Activated CD4-positive, alpha-beta T cell treated with anti-CD3 and anti-CD28 coated beads, Interleukin-2, amount 10 ng/mL, durations not matched to agents 24 days and 14 days (primary cell): ENCODE measurements at regions of chr1 and their contacts with region 1.

Region 1: DNA sequence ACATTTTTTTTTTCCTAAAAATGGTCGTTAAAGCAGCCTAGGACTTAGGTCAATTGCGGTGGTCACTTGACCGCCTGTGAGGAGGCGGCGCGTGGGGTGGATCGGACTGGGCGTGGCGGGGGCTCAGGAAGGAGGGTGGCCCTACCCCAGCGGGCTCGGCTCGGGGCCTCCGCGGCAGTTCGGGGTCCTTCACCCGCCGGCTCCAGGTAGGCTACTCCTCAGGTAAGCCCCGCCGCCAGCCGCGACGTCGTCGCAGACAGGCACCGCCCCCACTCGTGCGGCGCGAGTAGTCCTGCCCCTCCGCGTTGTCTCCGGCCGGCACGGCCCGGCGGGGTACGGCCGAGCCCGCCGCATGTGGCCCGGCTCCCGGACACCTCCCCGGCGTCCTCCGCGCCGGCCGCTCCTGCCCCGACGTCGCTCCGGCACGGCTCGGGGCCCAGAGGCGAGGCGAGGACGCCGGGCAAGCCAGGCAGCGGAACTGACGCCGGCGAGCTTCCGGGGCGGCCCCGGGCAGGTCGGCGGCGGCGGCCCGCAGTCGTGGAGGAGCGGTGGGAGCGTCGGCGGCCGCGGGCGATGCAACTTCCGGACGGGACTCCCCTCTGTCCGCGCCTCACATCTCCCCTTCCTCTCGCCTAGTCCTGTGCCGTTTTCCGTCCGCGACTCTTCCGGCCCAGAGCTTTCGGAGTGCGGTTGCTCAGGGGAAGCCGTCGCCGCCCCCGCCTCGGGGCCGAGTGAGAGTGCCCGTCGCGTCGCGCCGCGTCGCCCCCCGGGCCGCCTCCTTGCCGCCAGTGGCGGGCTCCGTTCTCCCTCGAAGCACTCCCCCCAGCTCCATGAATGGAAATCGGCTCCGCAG is at the start of gene AGO3:
- DNase-seq: peak; percentile 96
- H3K4me3 Mint-ChIP-seq: peak within 1 kb of the TSS; percentile 94
- H3K27ac Mint-ChIP-seq: peak within 1 kb of the TSS; percentile 95
- H3K4me1 Mint-ChIP-seq: peaks cover 22% of the 10 kb centered on the region
- H3K27me3 Mint-ChIP-seq: no peaks in the 10 kb centered on the region
- total RNA-seq, gene AGO3: 25.9 and 32.1 TPM in 2 replicates

Region 2: GRCh38 chr1:35835398-35835797 is 95.4 kb before region 1 on chr1:
- intact Hi-C with region 1: no loop called
- DNase-seq: no peak
- H3K4me3 Mint-ChIP-seq: no peak overlapping the region
- H3K27ac Mint-ChIP-seq: no peak overlapping the region
- H3K4me1 Mint-ChIP-seq: no peaks in the 10 kb centered on the region
- H3K27me3 Mint-ChIP-seq: no peaks in the 10 kb centered on the region

Region 3: DNA sequence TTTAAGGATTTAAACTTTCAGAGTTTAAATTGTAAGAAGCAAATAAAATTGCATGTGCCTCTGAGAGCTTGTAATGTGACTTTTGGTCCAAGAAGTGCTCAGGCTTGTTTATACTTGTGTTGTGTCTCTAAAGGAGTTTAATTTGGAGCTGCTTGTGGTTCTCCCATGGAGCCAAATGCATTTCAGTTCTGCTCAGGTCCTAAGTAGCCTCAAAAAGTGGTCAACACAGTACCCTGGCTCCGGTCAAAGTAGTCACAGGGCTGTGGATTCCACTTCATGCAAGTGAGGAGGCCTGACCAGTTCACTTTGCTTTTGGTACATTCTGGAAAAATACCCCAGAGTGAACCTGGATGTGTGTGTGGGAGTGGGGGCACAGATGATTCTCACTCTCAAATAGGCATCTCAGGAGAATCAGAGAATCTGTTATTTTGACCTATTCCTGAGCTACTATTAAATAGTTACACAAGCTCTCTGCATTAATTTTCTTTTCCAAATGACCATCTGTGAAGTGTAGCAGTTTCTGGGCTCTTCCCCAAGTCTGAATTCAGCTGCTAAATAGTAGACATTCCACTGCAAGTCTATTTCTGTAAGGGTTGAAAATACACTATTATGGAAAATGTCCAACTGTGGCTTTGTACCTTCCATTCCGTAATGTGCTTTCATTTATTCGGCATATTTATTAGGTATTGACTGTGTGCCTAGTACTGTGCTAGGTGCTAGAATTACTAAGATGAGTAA is 79.5 kb before region 1 on chr1:
- intact Hi-C with region 1: no loop called
- DNase-seq: no peak
- H3K4me3 Mint-ChIP-seq: no peak overlapping the region
- H3K27ac Mint-ChIP-seq: no peak overlapping the region
- H3K4me1 Mint-ChIP-seq: no peaks in the 10 kb centered on the region
- H3K27me3 Mint-ChIP-seq: no peaks in the 10 kb centered on the region

Region 4: GRCh38 chr1:35882945-35883634 is 47.7 kb before region 1 on chr1 and contains the start of gene AGO1:
- intact Hi-C with region 1: loop called (anchors 2 kb)
- DNase-seq: peak; percentile 100
- H3K4me3 Mint-ChIP-seq: peak within 1 kb of the TSS; percentile 95
- H3K27ac Mint-ChIP-seq: peak within 1 kb of the TSS; percentile 82
- H3K4me1 Mint-ChIP-seq: peaks cover 41% of the 10 kb centered on the region
- H3K27me3 Mint-ChIP-seq: peaks cover 5% of the 10 kb centered on the region
- total RNA-seq, gene AGO1: 38.6 and 39.1 TPM in 2 replicates

Region 5: DNA sequence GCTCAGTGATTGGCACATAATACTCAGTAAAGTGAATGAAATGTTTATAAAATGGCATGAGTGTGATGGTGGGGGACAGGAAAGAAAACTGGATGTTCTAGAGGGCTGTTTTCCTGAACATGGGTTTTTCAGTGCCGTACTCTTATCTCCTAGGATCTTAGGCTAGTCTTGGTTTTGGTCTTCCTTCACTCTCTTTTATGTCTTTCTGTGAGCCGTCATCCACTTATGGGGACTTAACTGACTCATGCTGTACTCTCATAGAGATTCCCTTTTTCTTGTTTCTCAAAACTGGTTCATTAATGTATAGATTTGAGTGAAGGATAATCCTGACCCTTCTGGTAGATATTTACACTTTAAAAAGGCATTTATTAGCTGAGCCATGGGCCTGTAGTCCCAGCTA is 16.7 kb after region 1 on chr1:
- intact Hi-C with region 1: loop called (anchors 1 kb)
- DNase-seq: no peak
- H3K4me3 Mint-ChIP-seq: no peak overlapping the region
- H3K27ac Mint-ChIP-seq: peak overlapping the region; percentile 26
- H3K4me1 Mint-ChIP-seq: peaks cover 22% of the 10 kb centered on the region
- H3K27me3 Mint-ChIP-seq: no peaks in the 10 kb centered on the region

Region 6: DNA sequence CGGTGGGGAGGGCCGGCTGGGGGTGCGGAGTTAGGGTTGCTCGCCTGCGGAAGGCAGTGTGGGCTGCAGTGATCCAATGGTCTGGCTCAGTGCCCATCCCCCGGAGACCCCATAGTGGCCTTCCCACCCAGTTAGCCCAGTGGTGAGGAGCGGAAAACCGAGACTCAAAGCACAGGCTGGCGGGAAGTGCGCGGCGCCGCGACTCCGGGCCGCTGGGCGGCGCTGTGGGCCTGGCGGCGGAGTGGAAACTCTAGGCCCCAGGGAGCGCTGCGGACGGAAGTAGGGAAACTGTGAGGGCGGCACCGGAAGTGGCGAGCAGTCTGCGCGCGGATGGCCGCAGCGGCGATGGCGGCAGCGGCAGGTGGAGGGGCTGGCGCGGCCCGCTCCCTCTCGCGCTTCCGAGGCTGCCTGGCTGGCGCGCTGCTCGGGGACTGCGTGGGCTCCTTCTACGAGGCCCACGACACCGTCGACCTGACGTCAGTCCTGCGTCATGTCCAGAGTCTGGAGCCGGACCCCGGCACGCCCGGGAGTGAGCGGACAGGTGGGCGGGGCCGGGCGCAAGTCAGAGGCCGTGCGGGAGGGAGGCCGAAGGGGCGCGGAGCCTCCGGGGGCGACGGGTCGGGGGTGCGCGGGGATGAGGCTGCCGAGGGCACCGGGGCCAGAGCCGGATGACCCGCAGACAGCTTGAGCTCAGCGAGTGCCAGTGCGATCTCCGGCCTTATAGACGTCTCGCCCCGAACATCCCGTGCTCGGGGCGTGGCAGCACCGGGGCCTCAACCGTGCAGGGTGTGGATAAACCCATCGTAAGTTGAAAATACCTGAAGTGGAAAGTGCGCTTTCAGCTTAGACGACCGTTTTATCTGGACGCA is 158.0 kb after region 1 on chr1 and contains the start of gene ADPRS:
- intact Hi-C with region 1: loop called (anchors 1 kb)
- DNase-seq: peak; percentile 97
- H3K4me3 Mint-ChIP-seq: peak within 1 kb of the TSS; percentile 95
- H3K27ac Mint-ChIP-seq: peak within 1 kb of the TSS; percentile 89
- H3K4me1 Mint-ChIP-seq: peaks cover 21% of the 10 kb centered on the region
- H3K27me3 Mint-ChIP-seq: peaks cover 5% of the 10 kb centered on the region
- total RNA-seq, gene ADPRS: 35.3 and 38.8 TPM in 2 replicates